Posterior cingulate gyrus (tissue), 11 donors: ENCODE measurements at regions of chr11 and their contacts with region 1.

Region 1: DNA sequence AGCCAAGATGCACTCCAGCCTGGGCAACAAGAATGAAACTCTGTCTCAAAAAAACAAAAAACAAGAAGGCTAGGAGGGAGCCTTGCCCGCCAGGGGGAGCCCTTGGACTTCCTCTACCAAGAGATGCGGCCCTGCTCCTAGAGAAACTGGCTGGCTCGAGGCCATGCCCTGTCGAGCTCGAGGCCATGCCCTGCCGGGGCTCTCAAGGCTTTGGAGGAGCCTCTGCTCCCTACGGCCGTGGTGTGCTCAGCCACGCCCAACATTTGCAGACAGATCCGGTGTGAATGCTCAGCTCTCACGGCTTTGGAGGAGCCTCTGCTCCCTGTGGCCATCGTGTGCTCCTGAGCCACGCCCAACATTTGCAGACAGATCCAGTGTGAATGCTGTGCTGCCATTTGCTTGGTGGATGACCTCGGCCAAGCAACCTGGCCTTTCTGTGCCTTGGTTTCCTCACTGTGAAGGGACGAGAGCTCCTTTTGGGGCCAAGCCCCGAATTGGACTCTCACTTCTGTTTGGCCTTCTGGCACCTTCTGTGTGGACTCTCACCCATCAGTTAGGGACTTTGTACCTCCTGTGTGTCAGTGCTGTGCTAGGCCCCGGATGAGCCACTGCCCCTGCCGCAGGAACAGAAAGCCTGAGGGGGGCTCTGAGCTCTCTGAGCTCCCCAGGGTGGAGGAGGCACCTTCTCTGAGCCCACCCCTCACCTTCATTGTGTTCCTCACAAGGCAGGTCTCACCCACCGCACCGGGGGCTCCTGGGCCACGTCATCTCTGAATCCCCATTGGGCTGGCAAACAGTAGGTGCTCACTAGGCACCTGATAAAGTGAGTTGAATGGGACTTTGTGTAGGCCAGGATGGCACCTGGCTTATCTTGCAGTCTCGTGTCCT is 14.1 kb downstream of the C11orf24 start:
- DNase-seq: peak; percentile 91 to 99 (median 98)

Region 2: GRCh38 chr11:68213555-68214174 is 44.1 kb before region 1 on chr11:
- intact Hi-C with region 1: loop called (anchors 5 kb)
- DNase-seq: peak; percentile 73 to 98 (median 86)

Region 3: GRCh38 chr11:68297812-68298658 is 40.3 kb after region 1 on chr11:
- intact Hi-C with region 1: loop called (anchors 1 kb)
- DNase-seq: peak in 9 of 10 donors; percentile 43 to 96 (median 77)

Region 4: GRCh38 chr11:68383976-68384501 is 126.3 kb after region 1 on chr11:
- intact Hi-C with region 1: loop called (anchors 2 kb)
- DNase-seq: peak in 8 of 10 donors; percentile 34 to 93 (median 72)

Region 5: GRCh38 chr11:68447015-68447801 is 189.5 kb after region 1 on chr11:
- intact Hi-C with region 1: loop called (anchors 2 kb)
- DNase-seq: peak; percentile 67 to 97 (median 82)